Activated CD4-positive, alpha-beta memory T cell treated with anti-CD3 and anti-CD28 coated beads for 36 hours (primary cell): ENCODE measurements at regions of chr6 and their contacts with region 1.

Region 1: DNA sequence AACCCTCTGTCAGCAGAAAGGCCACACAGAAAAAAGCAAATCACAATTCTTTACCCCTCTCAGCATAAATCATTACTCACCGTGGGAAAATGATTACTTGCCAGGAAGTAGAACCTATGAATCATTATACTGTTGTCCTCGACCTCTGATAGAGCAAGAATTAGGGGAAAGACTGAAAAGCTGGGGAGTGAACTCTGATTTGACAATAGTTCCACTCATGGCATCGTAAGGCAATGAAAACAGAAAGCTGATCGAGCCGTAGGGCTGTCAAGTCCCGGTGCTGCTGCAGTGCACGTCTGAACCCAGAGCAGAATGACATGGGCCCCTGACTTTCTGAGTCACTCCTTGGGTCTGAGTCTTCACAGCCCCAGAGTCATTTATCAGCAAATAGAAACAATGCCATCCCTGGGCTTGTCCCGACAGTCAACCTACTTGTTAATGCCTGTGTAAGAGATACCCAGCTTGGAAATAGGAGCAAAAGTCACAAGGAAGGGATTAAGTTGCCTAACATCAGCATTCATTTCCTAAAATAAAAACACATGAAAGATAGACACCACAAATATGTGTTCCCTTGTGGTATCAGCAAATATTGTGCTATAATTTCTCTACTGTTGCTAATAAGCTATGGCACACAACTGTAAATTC is 224.8 kb upstream of the MARCKS start:
- DNase-seq: peak; percentile 77
- H3K4me3 Mint-ChIP-seq: peak overlapping the region; percentile 54
- H3K27ac Mint-ChIP-seq: peak overlapping the region; percentile 72
- H3K4me1 Mint-ChIP-seq: peaks cover 52% of the 10 kb centered on the region
- H3K27me3 Mint-ChIP-seq: no peaks in the 10 kb centered on the region

Region 2: GRCh38 chr6:112289038-112289566 is 1343.2 kb before region 1 on chr6:
- CTCF ChIA-PET with region 1: no interaction called
- POLR2A ChIA-PET with region 1: no interaction called
- intact Hi-C with region 1: loop called (anchors 5 kb)
- DNase-seq: no peak
- H3K4me3 Mint-ChIP-seq: no peak overlapping the region
- H3K27ac Mint-ChIP-seq: no peak overlapping the region
- H3K4me1 Mint-ChIP-seq: peaks cover 20% of the 10 kb centered on the region
- H3K27me3 Mint-ChIP-seq: peaks cover 26% of the 10 kb centered on the region

Region 3: DNA sequence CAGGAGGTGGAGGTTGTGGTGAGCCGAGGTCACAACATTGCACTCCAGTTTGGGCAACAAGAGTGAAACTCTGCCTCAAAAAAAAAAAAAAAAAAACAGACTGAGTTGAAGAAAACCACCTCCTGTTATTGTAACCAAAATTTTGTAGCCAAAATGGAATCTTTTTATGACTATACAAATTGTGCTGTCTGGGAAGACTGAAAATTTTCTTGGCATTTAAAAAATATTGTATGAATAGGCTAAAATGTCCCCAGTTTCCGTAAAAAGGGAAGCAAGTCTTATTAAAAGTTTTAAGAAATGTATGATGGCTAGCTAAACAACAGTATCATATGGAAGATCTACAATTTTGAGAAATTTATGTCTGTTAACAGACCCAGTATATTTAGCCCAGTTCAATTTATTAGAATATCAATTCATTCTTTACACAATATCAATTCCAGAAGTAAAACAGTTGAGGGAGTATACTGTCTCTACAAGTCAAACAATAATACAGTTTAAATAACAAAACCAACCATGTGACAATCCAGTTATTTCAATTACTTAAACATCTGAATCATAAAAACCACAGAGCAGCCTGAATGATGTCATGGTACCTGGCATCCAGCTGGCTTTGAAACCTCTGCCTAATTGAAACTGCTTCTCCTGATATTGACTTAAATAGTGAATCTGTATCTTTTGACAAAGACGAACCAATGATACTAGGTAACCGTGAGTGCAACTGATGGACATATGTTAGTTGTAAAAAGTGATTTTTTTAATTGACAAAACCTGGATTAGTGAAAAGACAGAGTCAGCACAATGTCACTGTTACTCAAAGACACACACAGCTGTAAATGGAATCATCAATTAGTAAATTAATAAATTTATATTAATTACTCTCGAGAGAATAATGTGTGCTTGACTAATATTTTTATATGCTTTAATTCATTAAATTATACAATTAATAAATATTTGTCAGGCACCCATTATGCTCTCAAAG is 58.2 kb after region 1 on chr6:
- CTCF ChIA-PET with region 1: no interaction called
- POLR2A ChIA-PET with region 1: no interaction called
- intact Hi-C with region 1: loop called (anchors 1 kb)
- DNase-seq: peak; percentile 16
- H3K4me3 Mint-ChIP-seq: no peak overlapping the region
- H3K27ac Mint-ChIP-seq: no peak overlapping the region
- H3K4me1 Mint-ChIP-seq: no peaks in the 10 kb centered on the region
- H3K27me3 Mint-ChIP-seq: no peaks in the 10 kb centered on the region

Region 4: DNA sequence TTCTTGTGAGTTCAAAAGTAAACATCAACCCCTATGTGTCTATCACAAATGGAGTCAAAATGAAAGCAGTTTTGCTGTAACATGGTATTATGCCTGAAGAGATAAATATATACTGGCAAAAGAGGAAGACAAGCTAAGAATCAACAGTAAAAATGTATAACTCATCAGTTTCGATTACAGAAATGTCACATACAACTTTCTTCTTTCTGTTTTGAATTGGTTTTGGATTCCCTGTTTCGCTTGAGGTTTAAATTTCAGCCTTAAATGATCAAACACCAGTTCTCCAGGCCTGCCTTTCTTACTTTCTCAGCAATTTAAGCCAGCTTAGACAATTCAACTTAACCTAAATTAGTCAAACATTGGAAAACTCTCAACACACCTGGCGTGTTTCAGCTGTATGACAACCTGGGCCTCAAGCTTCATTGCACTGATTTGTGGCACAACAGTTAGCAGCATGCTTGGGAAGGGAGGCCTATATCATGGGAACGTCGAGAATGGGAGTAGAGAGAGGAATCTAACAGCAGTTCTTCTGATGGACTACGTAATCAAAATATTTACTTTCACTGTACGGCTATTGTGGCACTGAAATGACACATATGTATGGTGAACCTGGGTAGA is 172.9 kb after region 1 on chr6:
- CTCF ChIA-PET with region 1: no interaction called
- POLR2A ChIA-PET with region 1: no interaction called
- intact Hi-C with region 1: loop called (anchors 5 kb)
- DNase-seq: no peak
- H3K4me3 Mint-ChIP-seq: no peak overlapping the region
- H3K27ac Mint-ChIP-seq: no peak overlapping the region
- H3K4me1 Mint-ChIP-seq: peaks cover 3% of the 10 kb centered on the region
- H3K27me3 Mint-ChIP-seq: peaks cover 3% of the 10 kb centered on the region

Region 5: DNA sequence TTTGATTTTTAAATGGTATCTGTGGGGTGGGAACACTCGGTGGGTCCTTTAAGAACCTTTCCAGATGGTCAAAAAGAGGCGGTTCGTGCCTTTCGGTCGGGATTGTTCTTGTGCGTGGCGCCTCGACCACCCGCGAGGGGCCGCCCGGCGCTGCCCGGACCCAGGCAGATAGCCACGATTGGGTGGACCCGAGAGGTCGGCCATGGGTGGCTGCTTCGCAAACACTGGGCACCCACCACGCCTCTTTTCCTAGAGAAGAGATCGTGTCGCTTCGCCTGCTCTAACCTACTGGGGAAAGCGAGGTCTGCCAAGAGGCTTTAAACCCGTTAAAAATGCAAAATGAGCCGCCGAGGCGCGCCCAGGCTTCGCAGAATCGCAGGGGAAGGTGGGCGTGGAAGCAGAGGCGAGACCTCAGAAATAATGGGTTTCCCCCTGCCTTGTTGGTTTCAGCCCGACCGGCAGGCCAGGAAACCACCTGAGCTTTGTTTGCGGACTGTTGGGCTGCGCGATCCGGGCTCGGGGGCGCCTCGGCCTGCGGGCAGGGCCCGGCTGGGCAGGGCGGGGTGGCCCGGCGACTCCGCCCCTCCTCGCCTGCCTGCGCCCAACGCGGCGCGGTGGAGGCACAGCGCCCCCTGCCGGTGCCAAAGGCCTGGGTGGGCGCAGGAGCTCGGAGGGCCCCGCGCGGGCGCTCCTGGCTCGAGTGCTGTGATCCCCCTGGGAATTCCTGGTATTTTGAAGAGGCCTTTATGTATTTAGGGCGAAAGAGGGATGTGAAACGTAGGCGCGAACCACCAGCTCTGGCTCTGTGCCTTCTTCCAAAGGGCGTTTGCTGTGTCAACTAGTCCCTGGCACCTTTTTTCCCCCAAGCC is 226.4 kb after region 1 on chr6:
- CTCF ChIA-PET with region 1: no interaction called
- POLR2A ChIA-PET with region 1: interaction called, 3 read pairs
- intact Hi-C with region 1: loop called (anchors 2 kb)
- DNase-seq: peak; percentile 86
- H3K4me3 Mint-ChIP-seq: no peak overlapping the region
- H3K27ac Mint-ChIP-seq: no peak overlapping the region
- H3K4me1 Mint-ChIP-seq: peaks cover 16% of the 10 kb centered on the region
- H3K27me3 Mint-ChIP-seq: peaks cover 30% of the 10 kb centered on the region

Region 6: GRCh38 chr6:113970805-113971676 is 338.7 kb after region 1 on chr6 and contains the start of gene HDAC2:
- CTCF ChIA-PET with region 1: no interaction called
- POLR2A ChIA-PET with region 1: no interaction called
- intact Hi-C with region 1: loop called (anchors 5 kb)
- DNase-seq: peak; percentile 90
- H3K4me3 Mint-ChIP-seq: peak within 1 kb of the TSS; percentile 96
- H3K27ac Mint-ChIP-seq: peak within 1 kb of the TSS; percentile 96
- H3K4me1 Mint-ChIP-seq: peaks cover 29% of the 10 kb centered on the region
- H3K27me3 Mint-ChIP-seq: no peaks in the 10 kb centered on the region
- total RNA-seq, gene HDAC2: 93.7 to 95.1 TPM